PC-9 (cell line): ENCODE measurements at regions of chr3 and their contacts with region 1.

Region 1: GRCh38 chr3:112486811-112487505 is 12.3 kb downstream of the BTLA start:
- DNase-seq: no peak
- H3K4me3 ChIP-seq: no peak overlapping the region
- H3K27ac ChIP-seq: no peak overlapping the region
- H3K4me1 ChIP-seq: no peaks in the 10 kb centered on the region
- H3K27me3 ChIP-seq: peaks cover 5% of the 10 kb centered on the region; the same call in 1 of the 2 replicates
- CTCF ChIP-seq: no peak

Region 2: GRCh38 chr3:112373924-112374323 is 113.0 kb before region 1 on chr3:
- CTCF ChIA-PET with region 1: no interaction called
- POLR2A ChIA-PET with region 1: interaction called, 10 read pairs
- intact Hi-C with region 1: no loop called
- DNase-seq: no peak
- H3K4me3 ChIP-seq: no peak overlapping the region
- H3K27ac ChIP-seq: no peak overlapping the region
- H3K4me1 ChIP-seq: no peaks in the 10 kb centered on the region
- H3K27me3 ChIP-seq: no peaks in the 10 kb centered on the region
- CTCF ChIP-seq: no peak